Colonic mucosa (tissue), 4 donors: ENCODE measurements at regions of chr13 and their contacts with region 1.

Region 1: DNA sequence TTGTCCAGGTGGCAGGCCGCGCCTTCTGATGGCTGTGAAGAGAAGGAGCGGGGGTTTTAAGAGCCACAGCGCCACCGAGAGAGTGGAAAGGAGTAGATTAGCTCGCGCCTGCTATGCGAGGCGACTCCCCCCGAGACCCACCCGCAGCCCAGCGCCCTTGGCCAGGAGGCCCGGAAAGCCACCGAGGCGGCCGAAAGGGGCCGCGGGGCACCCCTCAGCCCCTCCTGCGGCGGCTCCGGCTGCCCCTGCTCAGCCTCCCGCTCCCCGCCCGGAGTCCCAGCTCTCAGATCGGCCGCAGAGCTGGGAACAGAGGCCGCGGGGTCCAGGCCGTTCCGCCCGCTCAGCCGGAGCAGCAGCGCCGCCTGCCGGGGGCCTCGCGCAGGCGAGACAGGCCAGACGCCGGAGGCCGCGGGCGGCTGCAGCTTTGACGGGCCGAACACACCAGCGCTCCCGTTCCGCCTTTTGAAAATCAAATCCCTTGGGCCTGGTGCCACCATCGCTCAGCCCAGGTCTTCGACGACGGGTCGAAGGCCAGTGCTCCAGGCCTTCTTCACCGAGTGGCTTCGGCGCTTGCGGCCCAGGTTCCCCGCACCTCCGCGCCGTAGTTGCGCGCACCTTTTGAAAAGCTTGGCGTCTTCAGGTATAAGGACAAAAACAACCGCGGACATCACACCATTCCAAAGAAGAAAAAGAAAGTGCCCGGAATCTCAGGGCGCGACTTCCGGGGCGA is 15.3 kb downstream of the CDX2 start:
- DNase-seq: peak; percentile 82
- H3K4me3 ChIP-seq: peak overlapping the region; percentile 46
- H3K27ac ChIP-seq: peak overlapping the region; percentile 88
- H3K4me1 ChIP-seq: no peaks in the 10 kb centered on the region
- H3K27me3 ChIP-seq: peaks cover 5% of the 10 kb centered on the region
- CTCF ChIP-seq: peak; percentile 95

Region 2: GRCh38 chr13:27868641-27869435 is 85.0 kb before region 1 on chr13:
- intact Hi-C with region 1: loop called (anchors 5 kb)
- DNase-seq: no peak
- H3K4me3 ChIP-seq: no peak overlapping the region
- H3K27ac ChIP-seq: no peak overlapping the region
- H3K4me1 ChIP-seq: no peaks in the 10 kb centered on the region
- H3K27me3 ChIP-seq: no peaks in the 10 kb centered on the region
- CTCF ChIP-seq: peak; percentile 37